Upper lobe of right lung (tissue), 1 donor: ENCODE measurements at regions of chr7 and their contacts with region 1.

Region 1: GRCh38 chr7:136009488-136010079 is 32.4 kb upstream of the MTPN start:
- DNase-seq: no peak
- ATAC-seq: peak; percentile 65
- H3K4me3 ChIP-seq: no peak overlapping the region
- H3K27ac ChIP-seq: no peak overlapping the region
- H3K4me1 ChIP-seq: no peaks in the 10 kb centered on the region
- H3K27me3 ChIP-seq: no peaks in the 10 kb centered on the region
- CTCF ChIP-seq: peak; percentile 80

Region 2: DNA sequence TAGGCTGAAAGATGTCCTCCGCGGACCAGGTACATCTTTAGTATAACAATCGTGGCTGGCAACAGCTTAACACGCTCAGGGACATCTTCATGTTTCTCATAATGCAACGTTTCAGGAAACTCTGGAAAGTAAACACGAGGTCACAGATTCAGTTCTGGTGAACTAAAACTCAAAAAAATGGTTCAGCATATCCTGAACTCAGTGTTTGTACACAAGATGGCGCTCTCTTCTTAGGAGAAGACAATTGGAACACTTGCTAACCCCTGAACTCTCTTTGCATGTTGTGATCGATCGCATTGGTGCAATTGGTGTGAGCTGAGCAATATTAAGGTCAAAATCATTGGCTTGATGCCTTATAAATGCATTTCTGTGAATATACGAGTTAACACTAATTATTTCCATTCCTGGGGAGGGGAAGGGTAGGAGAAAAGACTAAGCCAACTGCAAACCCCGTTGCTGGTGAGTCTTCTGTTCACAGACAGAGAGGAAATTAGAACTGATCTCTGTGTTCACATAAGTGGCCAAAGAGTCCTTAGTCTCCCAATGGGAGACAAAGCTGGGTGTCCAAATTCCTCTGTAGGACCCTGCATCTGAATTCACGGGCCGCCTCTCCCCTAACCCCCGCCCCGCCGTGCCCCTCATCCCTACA is 208.4 kb before region 1 on chr7:
- intact Hi-C with region 1: loop called (anchors 10 kb)
- DNase-seq: no peak
- ATAC-seq: peak; percentile 76
- H3K4me3 ChIP-seq: no peak overlapping the region
- H3K27ac ChIP-seq: no peak overlapping the region
- H3K4me1 ChIP-seq: peaks cover 9% of the 10 kb centered on the region
- H3K27me3 ChIP-seq: peaks cover 10% of the 10 kb centered on the region
- CTCF ChIP-seq: peak; percentile 81

Region 3: GRCh38 chr7:136174477-136175125 is 165.0 kb after region 1 on chr7:
- intact Hi-C with region 1: no loop called
- DNase-seq: no peak
- ATAC-seq: no peak
- H3K4me3 ChIP-seq: no peak overlapping the region
- H3K27ac ChIP-seq: no peak overlapping the region
- H3K4me1 ChIP-seq: no peaks in the 10 kb centered on the region
- H3K27me3 ChIP-seq: no peaks in the 10 kb centered on the region
- CTCF ChIP-seq: no peak